Caco-2 (cell line): ENCODE measurements at regions of chr3 and their contacts with region 1.

Region 1: GRCh38 chr3:186121968-186122367 is 13.1 kb upstream of the ETV5 start:
- DNase-seq: no peak
- H3K4me3 ChIP-seq: no peak overlapping the region
- H3K4me3 Mint-ChIP-seq: peak overlapping the region; percentile 56
- H3K27ac Mint-ChIP-seq: peak overlapping the region; percentile 24
- H3K4me1 ChIP-seq: 0 out of 2 replicates have a peak, but pooled peaks cover 11% of the 10 kb centered on the region
- H3K4me1 Mint-ChIP-seq: peaks cover 31% of the 10 kb centered on the region
- H3K27me3 ChIP-seq: no peaks in the 10 kb centered on the region
- H3K27me3 Mint-ChIP-seq: no peaks in the 10 kb centered on the region
- CTCF ChIP-seq: no peak

Region 2: DNA sequence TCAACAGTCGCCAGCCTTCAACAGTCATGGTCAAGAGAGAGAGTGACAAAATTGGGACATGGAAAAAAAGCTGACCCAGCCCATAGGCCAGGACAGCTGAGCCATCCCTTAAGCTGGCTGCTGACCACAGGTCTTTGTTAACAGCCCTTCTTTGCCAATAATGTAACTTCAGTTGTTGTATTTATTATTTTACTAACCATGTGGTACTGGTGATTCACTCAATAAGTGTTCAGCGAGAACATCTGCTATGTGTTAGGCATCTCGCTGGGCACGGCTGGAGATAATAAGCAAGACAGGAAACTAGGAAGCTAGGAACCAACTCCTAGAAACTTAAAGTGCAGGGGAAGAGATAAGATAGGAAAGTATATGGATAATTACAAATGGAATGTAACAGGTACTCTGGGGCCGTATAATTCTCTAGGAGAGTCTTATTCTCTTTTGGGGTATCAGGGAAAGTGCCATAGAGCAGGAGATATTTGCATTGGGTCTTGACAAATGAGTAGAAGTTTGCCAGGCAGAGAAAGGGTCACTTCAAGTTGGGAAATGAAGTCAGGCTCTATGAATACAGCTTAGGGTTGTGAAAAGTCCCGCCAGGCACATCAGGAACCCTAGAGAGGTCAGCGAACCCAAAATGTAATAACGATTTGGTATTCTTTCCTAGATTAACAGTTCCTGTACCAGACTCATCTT is 100.2 kb before region 1 on chr3:
- CTCF ChIA-PET with region 1: no interaction called
- POLR2A ChIA-PET with region 1: no interaction called
- intact Hi-C with region 1: no loop called
- DNase-seq: no peak
- H3K4me3 ChIP-seq: no peak overlapping the region
- H3K4me3 Mint-ChIP-seq: no peak overlapping the region
- H3K27ac Mint-ChIP-seq: no peak overlapping the region
- H3K4me1 ChIP-seq: no peaks in the 10 kb centered on the region
- H3K4me1 Mint-ChIP-seq: no peaks in the 10 kb centered on the region
- H3K27me3 ChIP-seq: no peaks in the 10 kb centered on the region
- H3K27me3 Mint-ChIP-seq: peaks cover 8% of the 10 kb centered on the region
- CTCF ChIP-seq: no peak

Region 3: DNA sequence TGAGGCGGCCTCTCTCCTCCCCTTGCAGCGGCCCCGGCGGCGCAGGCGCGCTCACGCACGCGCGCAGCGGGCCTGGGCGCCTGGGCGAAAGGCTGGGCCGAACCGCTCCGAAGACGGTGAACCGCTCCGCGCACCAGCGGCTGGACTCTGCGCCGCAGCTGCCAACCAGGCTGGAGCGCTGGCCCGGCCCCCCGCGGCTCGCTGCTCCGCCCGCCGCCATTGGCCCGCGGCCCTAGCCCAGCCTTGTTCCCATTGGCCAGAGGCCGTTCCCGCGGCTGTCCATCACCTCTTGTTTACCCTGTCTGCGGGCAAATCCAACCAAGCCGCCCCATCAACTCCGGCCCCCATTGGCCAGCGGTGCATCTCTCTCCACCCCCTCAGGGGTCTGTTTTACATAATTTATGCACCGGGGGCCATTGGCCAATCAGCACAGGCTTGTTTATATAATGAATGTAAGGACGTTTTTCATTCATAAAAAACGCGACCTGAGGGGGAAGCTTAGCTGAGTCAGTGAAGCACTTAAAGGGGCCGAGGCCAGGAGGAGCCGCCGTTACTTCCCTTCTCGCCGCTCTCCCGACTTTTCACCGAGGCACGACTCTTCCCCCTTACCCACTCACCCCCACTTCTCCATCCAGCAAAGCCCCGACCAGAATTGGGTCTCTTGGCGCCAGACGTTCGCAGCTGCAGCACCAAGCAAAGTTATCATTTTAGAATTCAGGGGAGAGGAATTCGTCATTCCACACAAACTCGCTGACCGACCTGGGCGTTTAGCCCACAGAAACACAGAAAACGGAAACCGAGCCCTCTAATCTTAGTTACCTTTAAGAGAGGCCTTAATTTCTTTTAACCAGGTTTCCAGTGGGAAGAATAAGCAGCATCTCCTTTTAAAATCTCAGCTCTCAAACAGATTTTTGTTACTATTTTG is 12.8 kb before region 1 on chr3 and contains the start of gene ETV5:
- CTCF ChIA-PET with region 1: no interaction called
- POLR2A ChIA-PET with region 1: no interaction called
- intact Hi-C with region 1: loop called (anchors 1 kb)
- DNase-seq: peak; percentile 99
- H3K4me3 ChIP-seq: peak within 1 kb of the TSS; percentile 64
- H3K4me3 Mint-ChIP-seq: peak within 1 kb of the TSS; percentile 80
- H3K27ac Mint-ChIP-seq: peak within 1 kb of the TSS; percentile 79
- H3K4me1 ChIP-seq: peaks cover 8% of the 10 kb centered on the region; the same call in 1 of the 2 replicates
- H3K4me1 Mint-ChIP-seq: peaks cover 25% of the 10 kb centered on the region
- H3K27me3 ChIP-seq: no peaks in the 10 kb centered on the region
- H3K27me3 Mint-ChIP-seq: no peaks in the 10 kb centered on the region
- CTCF ChIP-seq: no peak
- total RNA-seq, gene ETV5: 16.2 and 18.6 TPM in 2 replicates

Region 4: GRCh38 chr3:186142393-186142932 is 20.5 kb after region 1 on chr3:
- CTCF ChIA-PET with region 1: no interaction called
- POLR2A ChIA-PET with region 1: no interaction called
- intact Hi-C with region 1: loop called (anchors 1 kb)
- DNase-seq: no peak
- H3K4me3 ChIP-seq: no peak overlapping the region
- H3K4me3 Mint-ChIP-seq: no peak overlapping the region
- H3K27ac Mint-ChIP-seq: no peak overlapping the region
- H3K4me1 ChIP-seq: no peaks in the 10 kb centered on the region
- H3K4me1 Mint-ChIP-seq: peaks cover 7% of the 10 kb centered on the region
- H3K27me3 ChIP-seq: no peaks in the 10 kb centered on the region
- H3K27me3 Mint-ChIP-seq: no peaks in the 10 kb centered on the region
- CTCF ChIP-seq: no peak

Region 5: GRCh38 chr3:186176511-186176943 is 54.6 kb after region 1 on chr3:
- CTCF ChIA-PET with region 1: no interaction called
- POLR2A ChIA-PET with region 1: no interaction called
- intact Hi-C with region 1: loop called (anchors 2 kb)
- DNase-seq: peak; percentile 66 to 75
- H3K4me3 ChIP-seq: no peak overlapping the region
- H3K4me3 Mint-ChIP-seq: peak overlapping the region; percentile 0
- H3K27ac Mint-ChIP-seq: peak overlapping the region; percentile 17
- H3K4me1 ChIP-seq: peaks cover 32% of the 10 kb centered on the region
- H3K4me1 Mint-ChIP-seq: peaks cover 36% of the 10 kb centered on the region
- H3K27me3 ChIP-seq: no peaks in the 10 kb centered on the region
- H3K27me3 Mint-ChIP-seq: no peaks in the 10 kb centered on the region
- CTCF ChIP-seq: no peak